Aorta (tissue), 5 donors: ENCODE measurements at regions of chr11 and their contacts with region 1.

Region 1: DNA sequence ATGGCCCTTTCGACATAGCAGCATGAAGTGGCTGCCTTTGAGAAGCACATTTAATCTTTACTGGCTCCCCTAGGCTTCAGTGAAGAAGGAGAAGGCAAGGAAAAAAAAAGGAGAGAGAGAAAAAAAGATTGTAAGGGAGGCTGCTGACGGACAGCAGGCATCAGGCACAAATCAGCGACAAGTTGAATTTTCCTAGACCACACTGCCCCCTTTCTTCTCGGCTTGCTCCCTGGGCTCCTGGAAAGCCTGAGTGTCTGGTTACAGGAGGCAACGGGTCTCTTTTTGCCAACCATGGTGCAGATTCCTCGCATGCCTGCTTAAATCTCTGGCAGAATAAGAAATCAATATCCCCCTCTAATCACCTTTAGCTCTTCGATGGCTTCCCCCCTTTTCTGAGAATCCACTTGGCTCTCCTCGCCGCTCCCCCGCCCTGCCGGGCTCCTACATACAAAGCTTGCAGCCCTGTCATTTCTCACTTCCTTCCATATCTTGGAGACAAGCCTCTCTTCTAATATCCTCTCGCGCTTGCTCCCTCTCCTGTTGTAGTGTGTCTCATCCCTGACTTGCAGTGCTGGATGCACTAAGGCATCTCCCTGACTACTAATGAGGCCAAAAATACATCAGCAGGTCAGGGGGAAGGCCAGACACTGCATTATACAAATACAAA is 14.3 kb downstream of the BLID start:
- DNase-seq: peak; percentile 75 to 76
- ATAC-seq: peak; percentile 91
- H3K4me3 ChIP-seq: peak overlapping the region; percentile 93 to 99
- H3K27ac ChIP-seq: peak overlapping the region; percentile 85 to 92
- H3K4me1 ChIP-seq: peaks cover 4 to 7% of the 10 kb centered on the region in 2 donors
- H3K27me3 ChIP-seq: no peaks in the 10 kb centered on the region

Region 2: DNA sequence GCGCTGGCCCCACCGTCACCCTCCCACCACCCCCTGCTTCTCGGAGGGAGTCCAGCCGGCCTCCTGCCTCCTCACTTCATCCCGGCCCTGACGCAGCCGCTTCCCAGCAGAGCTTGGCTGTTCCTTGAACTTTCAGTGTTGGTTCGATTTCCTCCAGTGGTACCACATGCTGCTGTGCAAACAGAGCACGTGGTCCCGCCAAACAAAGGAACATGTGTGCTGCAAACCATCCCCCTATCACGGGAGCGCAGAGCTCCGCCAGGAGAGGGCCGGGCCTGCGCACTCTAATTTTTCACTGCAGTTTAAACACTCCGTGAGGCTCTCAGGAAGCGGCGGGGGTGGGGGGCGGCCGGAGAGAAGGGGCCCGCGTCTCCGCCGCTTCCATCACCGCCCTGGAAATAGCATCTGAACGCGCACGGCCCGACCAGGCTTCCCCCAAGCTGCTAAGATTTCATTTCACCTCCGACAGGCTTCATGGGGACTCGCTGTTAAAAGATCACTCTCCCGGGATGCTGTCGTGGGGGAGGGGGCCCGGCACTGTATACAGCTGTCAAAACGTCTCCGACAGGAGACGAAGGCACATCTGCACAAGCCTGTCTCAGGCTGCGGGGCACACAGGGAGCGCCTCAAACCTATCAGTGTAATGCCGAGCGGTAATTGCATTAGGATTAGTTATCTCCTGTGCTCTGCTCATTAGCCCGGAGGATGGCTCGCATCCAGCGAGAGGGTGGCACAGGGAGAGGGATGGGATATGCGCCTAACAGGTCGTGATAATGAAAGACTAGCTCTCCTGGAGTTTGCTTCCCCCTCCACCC is 379.1 kb before region 1 on chr11:
- intact Hi-C with region 1: loop called in 1 of 2 experiments (anchors 5 kb)
- DNase-seq: peak; percentile 89 to 91
- ATAC-seq: peak; percentile 94
- H3K4me3 ChIP-seq: peak overlapping the region; percentile 34 to 72
- H3K27ac ChIP-seq: peak overlapping the region; percentile 60 to 80
- H3K4me1 ChIP-seq: no peaks in the 10 kb centered on the region
- H3K27me3 ChIP-seq: no peaks in the 10 kb centered on the region

Region 3: DNA sequence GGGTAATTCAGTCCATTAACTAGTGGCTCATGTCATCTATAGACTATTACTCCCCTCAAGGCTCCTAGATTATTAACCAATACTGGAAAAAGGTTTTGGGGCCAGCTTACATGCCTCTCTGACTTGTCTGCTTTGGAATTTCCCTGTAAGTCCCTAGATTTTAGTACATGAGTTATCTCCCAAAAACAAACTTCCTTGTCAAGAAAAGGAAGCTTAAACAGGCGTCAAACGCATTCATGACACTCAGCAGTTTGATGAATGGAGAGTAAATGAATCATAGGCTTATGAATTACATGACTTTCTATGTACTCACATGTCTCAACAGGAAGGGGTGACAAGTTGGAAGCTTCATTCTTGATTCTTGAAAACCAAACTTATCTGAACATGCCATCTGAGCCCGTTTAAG is 56.6 kb before region 1 on chr11:
- intact Hi-C with region 1: loop called (anchors 5 kb)
- DNase-seq: no peak
- ATAC-seq: no peak
- H3K4me3 ChIP-seq: no peak overlapping the region
- H3K27ac ChIP-seq: peak overlapping the region in 1 of 2 donors; percentile 82
- H3K4me1 ChIP-seq: peaks cover 2 to 3% of the 10 kb centered on the region in 2 donors
- H3K27me3 ChIP-seq: no peaks in the 10 kb centered on the region

Region 4: GRCh38 chr11:122085264-122085663 is 16.5 kb before region 1 on chr11:
- intact Hi-C with region 1: no loop called
- DNase-seq: no peak
- ATAC-seq: peak; percentile 73
- H3K4me3 ChIP-seq: no peak overlapping the region
- H3K27ac ChIP-seq: no peak overlapping the region
- H3K4me1 ChIP-seq: peaks cover 0 to 9% of the 10 kb centered on the region in 2 donors
- H3K27me3 ChIP-seq: no peaks in the 10 kb centered on the region

Region 5: GRCh38 chr11:122189229-122189628 is 87.5 kb after region 1 on chr11:
- intact Hi-C with region 1: loop called in 1 of 2 experiments (anchors 5 kb)
- DNase-seq: no peak
- ATAC-seq: peak; percentile 88
- H3K4me3 ChIP-seq: no peak overlapping the region
- H3K27ac ChIP-seq: peak overlapping the region in 1 of 2 donors; percentile 90
- H3K4me1 ChIP-seq: peaks cover 3% of the 10 kb centered on the region in 2 donors
- H3K27me3 ChIP-seq: no peaks in the 10 kb centered on the region